GM12878 (cell line): ENCODE measurements at regions of chr7 and their contacts with region 1.

Region 1: DNA sequence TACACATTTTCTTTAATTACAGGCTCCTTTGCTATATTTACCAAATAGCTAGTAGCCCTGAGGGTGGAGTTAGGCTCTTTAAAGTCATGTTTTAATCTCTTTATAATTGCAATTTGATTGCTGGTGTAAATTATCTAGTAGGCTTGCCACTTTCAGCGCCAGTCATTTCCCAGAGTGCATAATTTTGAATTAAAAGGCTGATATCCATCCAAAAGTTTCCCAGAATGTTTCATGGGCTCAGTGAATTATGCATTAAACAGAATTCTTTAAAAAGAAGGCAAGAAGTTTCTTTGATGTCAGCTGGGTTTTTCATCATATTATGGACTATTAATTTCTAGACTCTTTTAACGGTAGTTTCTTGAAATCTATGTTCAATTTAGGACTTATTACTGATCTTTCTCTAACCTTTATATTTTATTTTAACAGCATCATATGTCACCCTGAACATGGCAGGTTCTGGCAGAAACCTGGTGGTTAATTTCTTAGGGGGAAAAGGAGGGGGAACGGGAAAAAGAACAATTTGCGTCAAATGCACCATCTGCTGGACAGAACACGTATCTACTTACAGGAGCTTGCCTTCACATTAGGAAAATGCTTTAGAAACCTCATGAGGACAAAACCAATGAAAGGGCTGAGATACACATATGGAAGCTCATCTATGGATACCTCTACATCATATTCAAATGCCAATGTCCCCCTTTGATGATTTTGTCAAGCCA is 171.1 kb downstream of the GRM3 start:
- DNase-seq: no peak
- ATAC-seq: peak; percentile 48; the same call in 2 of the 3 replicates
- H3K4me3 ChIP-seq: no peak overlapping the region
- H3K27ac ChIP-seq: no peak overlapping the region
- H3K4me1 ChIP-seq: no peaks in the 10 kb centered on the region
- H3K27me3 ChIP-seq: no peaks in the 10 kb centered on the region
- CTCF ChIP-seq: peak; percentile 39 to 67 (median 49); a peak in 5 of 6 replicates
- EP300 ChIP-seq: no peak
- POLR2A ChIP-seq: no peak
- RAD21 ChIP-seq: peak; percentile 89

Region 2: GRCh38 chr7:85890244-85890811 is 924.5 kb before region 1 on chr7:
- CTCF ChIA-PET with region 1: interaction called, 3 read pairs
- POLR2A ChIA-PET with region 1: no interaction called
- RAD21 ChIA-PET with region 1: no interaction called
- SMC1A ChIA-PET with region 1: no interaction called
- in situ Hi-C with region 1: no loop called
- intact Hi-C with region 1: loop called (anchors 10 kb)
- DNase-seq: no peak
- ATAC-seq: peak; percentile 66
- H3K4me3 ChIP-seq: no peak overlapping the region
- H3K27ac ChIP-seq: no peak overlapping the region
- H3K4me1 ChIP-seq: no peaks in the 10 kb centered on the region
- H3K27me3 ChIP-seq: no peaks in the 10 kb centered on the region
- CTCF ChIP-seq: peak; percentile 42 to 57 (median 55); a peak in 5 of 6 replicates
- EP300 ChIP-seq: no peak
- POLR2A ChIP-seq: no peak
- RAD21 ChIP-seq: peak; percentile 77

Region 3: DNA sequence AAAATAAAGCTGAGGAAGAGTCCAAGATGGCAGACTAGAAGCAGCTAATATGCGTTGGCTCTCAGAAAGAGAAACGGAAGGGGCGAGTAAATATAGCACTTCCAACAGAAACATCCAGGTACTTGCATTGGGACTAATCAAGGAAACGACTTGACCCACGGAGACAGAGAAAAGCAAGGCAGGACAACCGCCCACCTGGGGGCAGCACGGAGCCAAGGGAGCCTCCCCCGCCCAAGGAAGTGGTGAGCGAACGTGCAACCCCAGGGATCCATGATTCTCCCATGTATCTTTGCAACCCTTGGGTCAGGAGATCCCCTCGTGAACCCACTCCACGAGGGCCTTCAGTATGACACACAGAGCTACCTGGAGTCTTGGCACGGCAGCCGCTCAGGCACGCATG is 216.5 kb before region 1 on chr7:
- CTCF ChIA-PET with region 1: interaction called, 12 read pairs
- POLR2A ChIA-PET with region 1: no interaction called
- RAD21 ChIA-PET with region 1: interaction called, 3 read pairs
- SMC1A ChIA-PET with region 1: interaction called, 5 read pairs
- in situ Hi-C with region 1: loop called (anchors 10 kb)
- intact Hi-C with region 1: loop called (anchors 1 kb)
- DNase-seq: no peak
- ATAC-seq: peak; percentile 79
- H3K4me3 ChIP-seq: no peak overlapping the region
- H3K27ac ChIP-seq: no peak overlapping the region
- H3K4me1 ChIP-seq: no peaks in the 10 kb centered on the region
- H3K27me3 ChIP-seq: no peaks in the 10 kb centered on the region; a peak in 1 of 4 replicates
- CTCF ChIP-seq: peak; percentile 26 to 66 (median 35); a peak in 5 of 6 replicates
- EP300 ChIP-seq: no peak
- POLR2A ChIP-seq: no peak
- RAD21 ChIP-seq: peak; percentile 58

Region 4: GRCh38 chr7:86667732-86668131 is 147.1 kb before region 1 on chr7:
- CTCF ChIA-PET with region 1: interaction called, 5 read pairs
- POLR2A ChIA-PET with region 1: no interaction called
- RAD21 ChIA-PET with region 1: interaction called, 7 read pairs
- SMC1A ChIA-PET with region 1: interaction called, 9 read pairs
- in situ Hi-C with region 1: no loop called
- intact Hi-C with region 1: loop called (anchors 5 kb)
- DNase-seq: no peak
- ATAC-seq: peak; percentile 24; the same call in 1 of the 3 replicates
- H3K4me3 ChIP-seq: no peak overlapping the region
- H3K27ac ChIP-seq: no peak overlapping the region
- H3K4me1 ChIP-seq: no peaks in the 10 kb centered on the region
- H3K27me3 ChIP-seq: no peaks in the 10 kb centered on the region; a peak in 1 of 4 replicates
- CTCF ChIP-seq: peak in 2 of 3 experiments; percentile 17 to 31; a peak in 3 of 6 replicates
- EP300 ChIP-seq: no peak
- POLR2A ChIP-seq: no peak
- RAD21 ChIP-seq: peak; percentile 71

Region 5: DNA sequence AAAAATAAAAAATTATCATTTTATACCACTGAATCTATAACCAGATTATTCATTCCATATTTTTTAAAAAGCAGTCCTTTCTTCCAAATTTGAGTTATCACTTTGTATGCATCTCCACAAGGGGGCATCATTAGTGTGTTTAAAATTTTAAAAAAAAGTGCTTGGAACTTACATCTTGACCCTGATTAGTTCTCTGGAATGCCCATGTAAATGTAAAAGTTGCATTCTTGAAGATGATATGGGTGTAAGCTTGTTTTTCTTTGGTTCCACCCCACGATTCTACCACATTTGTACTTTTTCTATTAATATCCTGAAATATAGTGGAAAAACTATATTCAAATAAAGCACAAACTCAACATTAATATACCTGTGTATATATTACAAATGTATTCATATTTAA is 99.7 kb after region 1 on chr7:
- CTCF ChIA-PET with region 1: no interaction called
- POLR2A ChIA-PET with region 1: no interaction called
- RAD21 ChIA-PET with region 1: no interaction called
- SMC1A ChIA-PET with region 1: no interaction called
- in situ Hi-C with region 1: no loop called
- intact Hi-C with region 1: no loop called
- DNase-seq: no peak
- ATAC-seq: no peak
- H3K4me3 ChIP-seq: no peak overlapping the region
- H3K27ac ChIP-seq: no peak overlapping the region
- H3K4me1 ChIP-seq: no peaks in the 10 kb centered on the region
- H3K27me3 ChIP-seq: no peaks in the 10 kb centered on the region
- CTCF ChIP-seq: peak in 2 of 3 experiments; percentile 22 to 42; a peak in 4 of 6 replicates
- EP300 ChIP-seq: no peak
- POLR2A ChIP-seq: no peak
- RAD21 ChIP-seq: peak; percentile 42

Region 6: GRCh38 chr7:87435546-87435945 is 620.7 kb after region 1 on chr7:
- CTCF ChIA-PET with region 1: no interaction called
- POLR2A ChIA-PET with region 1: no interaction called
- RAD21 ChIA-PET with region 1: no interaction called
- SMC1A ChIA-PET with region 1: no interaction called
- in situ Hi-C with region 1: no loop called
- intact Hi-C with region 1: no loop called
- DNase-seq: no peak
- ATAC-seq: peak; percentile 57
- H3K4me3 ChIP-seq: no peak overlapping the region
- H3K27ac ChIP-seq: no peak overlapping the region
- H3K4me1 ChIP-seq: no peaks in the 10 kb centered on the region
- H3K27me3 ChIP-seq: no peaks in the 10 kb centered on the region
- CTCF ChIP-seq: no peak
- EP300 ChIP-seq: no peak
- POLR2A ChIP-seq: no peak
- RAD21 ChIP-seq: no peak